Motor neuron (in vitro differentiated cells): ENCODE measurements at regions of chr9 and their contacts with region 1.

Region 1: GRCh38 chr9:98074115-98074990 is 17.8 kb downstream of the NANS start:
- ATAC-seq: peak; percentile 42 to 78 (median 56)
- H3K4me3 ChIP-seq: no peak overlapping the region
- H3K27ac ChIP-seq: no peak overlapping the region
- H3K4me1 ChIP-seq: peaks cover 2 to 7% of the 10 kb centered on the region in 2 donors

Region 2: GRCh38 chr9:97921959-97922724 is 152.2 kb before region 1 on chr9 and contains the start of gene TRMO:
- in situ Hi-C with region 1: no loop called
- ATAC-seq: peak; percentile 82 to 94 (median 90)
- H3K4me3 ChIP-seq: peak within 1 kb of the TSS; percentile 44 to 64 (median 57)
- H3K27ac ChIP-seq: peak within 1 kb of the TSS; percentile 96 to 97
- H3K4me1 ChIP-seq: peaks cover 6 to 7% of the 10 kb centered on the region in 2 donors
- total RNA-seq, gene TRMO: 4.3 to 19.5 (median 11.5) TPM

Region 3: GRCh38 chr9:98263482-98264357 is 189.4 kb after region 1 on chr9:
- in situ Hi-C with region 1: loop called in 4 of 9 experiments (anchors 10 to 25 kb)
- ATAC-seq: peak; percentile 80 to 100 (median 98)
- H3K4me3 ChIP-seq: no peak overlapping the region
- H3K27ac ChIP-seq: no peak overlapping the region
- H3K4me1 ChIP-seq: no peaks in the 10 kb centered on the region